ENCODE measurements at regions of chr1 and their contacts with region 1.

Region 1: DNA sequence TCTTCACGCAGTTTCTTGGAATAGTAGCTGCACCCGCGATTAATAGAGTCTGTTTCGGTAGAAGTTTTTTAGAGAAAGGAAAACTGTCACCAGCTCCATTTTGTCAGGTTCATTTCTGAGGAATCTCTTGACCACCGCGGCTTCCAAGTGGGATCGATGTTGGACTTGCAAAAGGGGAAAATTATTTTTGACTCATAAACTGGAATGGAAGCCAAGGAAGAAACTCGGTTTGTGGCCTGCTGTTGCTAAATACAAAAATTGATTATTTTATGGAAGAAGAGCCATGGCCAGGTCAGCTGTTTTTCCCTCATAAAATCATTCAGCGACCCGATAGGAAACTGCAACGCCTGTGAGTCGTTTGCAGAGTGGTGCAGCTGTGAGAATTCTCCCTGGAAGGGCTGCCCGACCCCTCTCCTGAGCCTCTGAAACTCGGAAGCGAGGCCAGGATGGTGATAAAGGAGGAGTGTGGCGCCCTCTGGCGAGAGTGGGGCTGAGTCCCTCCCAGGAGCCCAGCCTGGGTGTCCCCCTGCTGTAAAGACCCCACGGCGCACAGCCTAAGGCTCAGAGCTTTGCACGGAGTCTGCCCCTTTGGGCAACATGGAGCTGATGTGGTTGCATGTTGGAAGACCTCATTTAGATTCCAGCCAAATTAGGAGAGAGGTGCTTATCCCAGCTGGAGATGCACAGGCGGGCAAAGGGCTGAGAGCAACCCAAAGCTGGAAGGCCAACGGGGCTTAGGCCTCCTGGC is 83.6 kb upstream of the SLC25A33 start:
- DNase-seq: no peak
- H3K4me3 ChIP-seq: no peak overlapping the region
- CTCF ChIP-seq: peak; percentile 87

Region 2: DNA sequence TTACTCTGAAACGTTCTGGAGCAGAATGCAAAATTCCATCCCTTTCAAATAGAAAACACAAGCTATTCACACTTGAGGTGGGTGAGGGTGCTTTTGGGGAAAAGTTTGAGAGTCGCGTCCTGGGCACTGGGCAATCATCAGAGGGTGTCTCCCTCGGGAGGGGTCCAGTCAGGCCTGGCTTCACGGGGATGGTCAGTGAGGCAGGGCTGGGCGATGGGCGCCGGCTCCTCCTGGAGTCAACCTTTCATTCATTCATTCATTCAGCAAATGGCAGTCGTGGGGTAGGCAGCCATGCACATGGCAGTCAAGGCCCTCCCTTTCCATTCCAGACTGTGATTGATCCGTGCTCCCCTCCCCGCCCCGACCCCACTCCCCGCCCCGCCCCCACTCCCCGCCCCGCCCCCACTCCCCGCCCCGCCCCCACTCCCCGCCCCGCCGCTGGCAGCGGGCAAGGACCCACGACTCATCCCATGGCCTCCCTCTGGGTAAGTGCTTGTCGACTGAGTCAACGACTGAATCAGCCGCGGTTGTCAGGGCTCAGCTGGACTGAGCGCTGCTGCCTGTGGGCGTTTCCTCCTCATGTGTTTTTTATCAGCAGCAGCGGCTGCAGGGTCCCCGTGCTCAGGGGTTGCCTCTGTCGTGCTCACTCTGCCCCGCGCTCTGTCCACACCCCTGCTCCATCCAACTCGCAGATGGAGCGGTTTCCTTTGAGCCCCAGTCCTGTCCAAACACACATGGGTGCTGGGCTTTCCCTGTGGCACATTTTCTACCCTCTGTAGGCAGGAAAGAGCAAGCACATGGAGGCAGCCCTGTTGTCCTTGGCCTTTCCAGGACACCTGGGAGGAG is 175.4 kb before region 1 on chr1:
- CTCF ChIA-PET with region 1: interaction called, 43 read pairs
- POLR2A ChIA-PET with region 1: no interaction called
- DNase-seq: no peak
- H3K4me3 ChIP-seq: peak overlapping the region; percentile 20
- CTCF ChIP-seq: no peak

Region 3: GRCh38 chr1:9302745-9303524 is 152.7 kb before region 1 on chr1:
- CTCF ChIA-PET with region 1: interaction called, 10 read pairs
- POLR2A ChIA-PET with region 1: no interaction called
- DNase-seq: peak; percentile 88
- H3K4me3 ChIP-seq: peak overlapping the region; percentile 6; the same call in 1 of the 2 replicates
- CTCF ChIP-seq: no peak

Region 4: DNA sequence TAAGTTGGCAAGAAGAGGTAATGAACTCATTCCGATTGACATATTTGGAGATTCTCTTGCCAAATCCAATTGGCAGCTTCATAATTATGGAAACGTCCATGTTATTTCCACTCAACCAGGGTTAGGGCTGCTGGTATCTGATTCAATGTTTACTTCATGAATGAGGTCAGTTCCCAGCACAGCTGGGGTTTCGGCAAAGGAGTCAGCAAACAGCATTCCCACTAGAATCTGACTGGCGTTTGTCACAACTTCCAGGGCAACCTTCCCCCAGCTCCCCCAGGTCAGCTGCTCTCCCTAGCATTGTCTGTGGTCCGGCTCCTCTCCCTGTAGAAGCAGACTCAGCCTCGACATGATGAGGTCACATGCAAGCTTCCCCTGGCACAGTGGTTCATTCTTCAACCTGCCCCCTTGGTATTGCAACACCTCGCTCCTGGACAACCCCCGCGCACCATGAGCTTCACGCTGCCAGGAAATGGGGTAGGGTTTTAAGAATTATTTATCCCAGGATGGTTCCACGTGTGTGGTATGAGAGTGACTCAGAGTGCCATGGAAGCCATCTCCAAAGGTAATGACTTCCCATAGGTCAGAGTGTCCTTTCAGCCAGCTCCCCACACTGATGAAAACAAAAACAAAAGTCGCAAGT is 17.1 kb before region 1 on chr1:
- CTCF ChIA-PET with region 1: interaction called, 31 read pairs
- POLR2A ChIA-PET with region 1: no interaction called
- DNase-seq: peak; percentile 10
- H3K4me3 ChIP-seq: no peak overlapping the region
- CTCF ChIP-seq: no peak

Region 5: GRCh38 chr1:9473032-9473792 is 17.6 kb after region 1 on chr1:
- CTCF ChIA-PET with region 1: interaction called, 24 read pairs
- POLR2A ChIA-PET with region 1: no interaction called
- DNase-seq: peak; percentile 63
- H3K4me3 ChIP-seq: no peak overlapping the region
- CTCF ChIP-seq: no peak

Measured in AG04449 (cell line).